ENCODE measurements at regions of chr18 and their contacts with region 1.

Region 1: DNA sequence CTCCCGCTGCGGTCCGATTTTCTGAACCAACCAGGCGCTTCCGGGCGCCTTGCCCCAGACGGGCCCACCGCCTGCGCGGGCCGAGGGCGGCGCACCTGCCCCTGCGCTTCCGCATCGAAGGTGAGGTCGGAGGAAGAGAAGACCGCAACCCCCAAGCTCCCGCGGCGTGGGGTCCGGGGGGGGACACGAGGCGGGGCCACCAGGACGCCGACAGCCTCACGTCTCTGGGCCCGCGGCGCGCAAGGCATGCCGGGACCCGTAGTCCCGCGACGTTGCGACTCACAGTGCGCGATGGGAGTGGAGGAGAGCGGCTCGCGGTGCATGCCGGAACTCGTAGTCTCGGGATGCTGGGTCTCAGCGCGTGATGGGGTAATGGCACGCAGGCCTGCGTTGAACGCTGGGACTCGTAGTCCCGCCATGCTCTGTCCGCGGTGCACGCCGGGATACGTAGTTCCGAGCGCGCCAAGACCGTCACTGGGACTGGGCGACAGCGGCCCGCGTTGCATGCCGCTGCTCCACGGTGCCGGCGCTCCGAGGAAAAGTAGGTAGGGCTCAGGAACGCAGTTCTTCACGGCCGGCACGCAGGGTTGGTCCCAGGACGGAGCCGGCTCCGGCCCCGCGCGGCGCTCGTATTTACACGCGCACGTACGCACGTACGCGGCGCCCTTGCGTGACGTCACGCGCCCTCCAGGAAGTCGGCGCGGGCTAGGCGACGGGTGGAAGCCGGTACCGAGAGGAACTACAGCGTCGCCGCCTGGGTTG is at the start of gene CTDP1:
- DNase-seq: peak; percentile 98
- ATAC-seq: peak; percentile 90
- H3K4me3 Mint-ChIP-seq: peak within 1 kb of the TSS; percentile 97
- H3K27ac Mint-ChIP-seq: peak within 1 kb of the TSS; percentile 98
- H3K4me1 Mint-ChIP-seq: peaks cover 47% of the 10 kb centered on the region
- H3K27me3 Mint-ChIP-seq: no peaks in the 10 kb centered on the region
- CTCF ChIP-seq: no peak
- total RNA-seq, gene CTDP1: 28.1 and 33.8 TPM in 2 replicates

Region 2: GRCh38 chr18:79405781-79406575 is 273.3 kb before region 1 on chr18:
- CTCF ChIA-PET with region 1: no interaction called
- POLR2A ChIA-PET with region 1: no interaction called
- intact Hi-C with region 1: loop called (anchors 1 kb)
- DNase-seq: peak; percentile 81
- ATAC-seq: peak; percentile 89
- H3K4me3 Mint-ChIP-seq: peak overlapping the region; percentile 80
- H3K27ac Mint-ChIP-seq: peak overlapping the region; percentile 98
- H3K4me1 Mint-ChIP-seq: peaks cover 65% of the 10 kb centered on the region
- H3K27me3 Mint-ChIP-seq: no peaks in the 10 kb centered on the region
- CTCF ChIP-seq: no peak

Region 3: DNA sequence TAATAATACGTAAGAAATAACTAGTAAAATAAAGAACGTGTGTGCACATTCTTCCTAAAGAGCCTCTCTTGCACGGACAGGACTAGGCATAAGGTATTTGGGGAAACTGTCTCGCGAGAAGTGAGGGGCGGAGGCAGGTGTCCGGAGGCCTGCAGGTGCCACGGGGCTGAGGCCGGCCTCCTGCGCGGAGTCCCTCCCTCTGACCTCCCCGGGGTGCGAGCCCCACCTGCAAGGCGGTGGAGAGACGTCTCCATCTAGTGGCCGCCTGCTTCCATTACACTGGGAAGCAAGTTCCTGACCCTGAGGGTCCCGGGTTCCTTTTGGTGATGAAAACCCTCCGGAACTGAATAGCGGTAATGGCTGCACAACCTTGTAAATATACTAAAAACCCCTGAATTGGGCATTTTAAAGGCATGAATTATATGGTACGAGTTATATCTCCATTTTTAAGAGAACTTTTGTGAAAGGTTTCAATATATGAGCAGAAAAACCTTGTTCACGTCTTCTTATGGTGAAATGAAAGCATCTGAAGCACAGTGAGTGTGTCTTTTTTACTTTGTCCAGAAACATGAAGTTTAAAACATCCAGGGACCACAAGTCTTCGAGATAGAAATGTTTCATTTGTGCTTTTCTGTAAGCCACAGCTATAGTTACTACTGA is 35.2 kb before region 1 on chr18:
- CTCF ChIA-PET with region 1: interaction called, 3 read pairs
- POLR2A ChIA-PET with region 1: no interaction called
- intact Hi-C with region 1: loop called (anchors 1 kb)
- DNase-seq: peak; percentile 68
- ATAC-seq: peak; percentile 93
- H3K4me3 Mint-ChIP-seq: no peak overlapping the region
- H3K27ac Mint-ChIP-seq: no peak overlapping the region
- H3K4me1 Mint-ChIP-seq: peaks cover 24% of the 10 kb centered on the region
- H3K27me3 Mint-ChIP-seq: no peaks in the 10 kb centered on the region
- CTCF ChIP-seq: peak; percentile 97

Region 4: DNA sequence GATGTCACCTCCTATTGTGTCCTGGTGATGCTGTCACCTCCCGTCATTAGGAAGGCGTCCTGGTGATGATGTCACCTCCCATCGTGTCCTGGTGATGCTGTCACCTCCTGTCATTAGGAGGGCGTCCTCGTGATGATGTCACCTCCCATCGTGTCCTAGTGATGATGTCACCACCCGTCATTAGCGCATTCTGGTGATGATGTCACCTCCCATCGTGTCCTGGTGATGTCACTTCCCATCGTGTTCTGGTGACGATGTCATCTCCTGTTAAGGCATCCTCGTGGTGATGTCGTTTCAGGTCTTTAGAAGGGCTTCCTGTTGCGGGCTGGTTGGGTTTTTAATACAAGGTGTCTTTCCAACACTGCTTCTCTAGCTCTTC is 41.1 kb after region 1 on chr18:
- CTCF ChIA-PET with region 1: no interaction called
- POLR2A ChIA-PET with region 1: no interaction called
- intact Hi-C with region 1: no loop called
- DNase-seq: no peak
- ATAC-seq: no peak
- H3K4me3 Mint-ChIP-seq: no peak overlapping the region
- H3K27ac Mint-ChIP-seq: no peak overlapping the region
- H3K4me1 Mint-ChIP-seq: no peaks in the 10 kb centered on the region
- H3K27me3 Mint-ChIP-seq: no peaks in the 10 kb centered on the region
- CTCF ChIP-seq: no peak

Region 5: DNA sequence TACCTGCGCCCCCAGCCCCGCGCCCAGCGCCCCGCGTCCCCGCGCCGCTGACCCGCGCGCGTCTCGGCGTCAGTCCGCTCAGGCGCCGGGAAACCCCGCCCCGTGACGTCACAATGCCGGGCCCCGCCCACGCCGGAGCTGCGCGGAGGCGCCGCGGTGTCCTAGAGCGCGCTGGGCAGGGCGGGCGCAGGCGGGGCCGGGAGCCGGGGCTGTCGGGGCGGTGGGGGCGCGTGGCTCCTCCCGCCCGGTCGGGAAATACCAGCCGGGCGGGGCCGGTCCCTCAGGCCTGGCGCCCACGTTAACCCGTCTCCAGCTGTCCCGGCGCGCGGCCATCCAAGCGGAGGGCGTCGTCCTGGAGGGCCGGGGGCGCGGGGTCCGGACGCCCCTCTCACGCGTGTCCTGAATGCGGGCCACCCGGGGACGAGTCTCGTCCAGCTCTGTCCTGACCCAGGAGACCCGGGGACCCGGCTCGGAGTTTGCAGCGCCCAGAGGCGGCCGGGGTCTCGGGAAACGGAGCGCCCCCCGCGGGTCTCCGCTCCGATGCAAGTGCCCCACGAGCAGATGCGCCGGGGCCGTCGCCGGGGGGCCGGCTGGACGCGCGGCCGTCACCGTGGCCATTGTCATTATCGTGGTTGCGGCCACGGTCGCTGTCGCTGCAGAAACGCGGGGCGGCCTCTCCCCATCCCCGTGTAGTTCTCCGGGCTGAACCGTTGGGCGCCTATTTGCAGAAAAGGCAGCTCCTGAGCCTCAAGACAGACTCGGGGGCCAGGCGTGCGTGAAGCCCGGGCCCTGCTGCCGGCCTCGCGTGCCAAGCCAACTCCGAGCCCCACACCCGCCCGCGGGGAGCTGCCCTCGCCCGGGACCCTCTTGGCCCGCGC is 272.5 kb after region 1 on chr18 and contains the start of gene SLC66A2:
- CTCF ChIA-PET with region 1: no interaction called
- POLR2A ChIA-PET with region 1: interaction called, 4 read pairs
- intact Hi-C with region 1: loop called (anchors 1 kb)
- DNase-seq: peak; percentile 97
- ATAC-seq: peak; percentile 80
- H3K4me3 Mint-ChIP-seq: peak within 1 kb of the TSS; percentile 85
- H3K27ac Mint-ChIP-seq: peak within 1 kb of the TSS; percentile 92
- H3K4me1 Mint-ChIP-seq: peaks cover 31% of the 10 kb centered on the region
- H3K27me3 Mint-ChIP-seq: no peaks in the 10 kb centered on the region
- CTCF ChIP-seq: no peak
- total RNA-seq, gene SLC66A2: 32.3 and 36.4 TPM in 2 replicates

Region 6: DNA sequence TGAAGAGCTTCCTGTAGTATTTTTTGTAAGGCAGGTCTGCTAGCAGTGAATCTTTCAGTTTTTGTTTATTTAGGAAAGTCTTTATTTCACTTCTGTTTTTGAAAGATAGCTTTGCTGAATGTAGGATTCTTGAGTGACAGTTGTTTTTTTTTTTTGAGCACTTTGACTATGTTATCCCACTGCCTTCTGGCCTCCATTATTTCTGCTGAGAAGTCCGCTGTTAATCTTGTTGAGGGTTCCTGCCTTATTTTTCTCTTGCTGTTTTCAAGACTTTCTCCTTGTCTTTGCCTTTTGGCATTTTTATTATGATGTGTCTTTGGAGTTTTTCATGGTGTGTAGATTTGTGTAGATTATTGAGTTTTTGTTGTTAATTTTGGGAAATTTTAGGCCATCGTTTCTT is 376.8 kb after region 1 on chr18:
- CTCF ChIA-PET with region 1: no interaction called
- POLR2A ChIA-PET with region 1: no interaction called
- intact Hi-C with region 1: no loop called
- DNase-seq: no peak
- ATAC-seq: no peak
- H3K4me3 Mint-ChIP-seq: no peak overlapping the region
- H3K27ac Mint-ChIP-seq: no peak overlapping the region
- H3K4me1 Mint-ChIP-seq: no peaks in the 10 kb centered on the region
- H3K27me3 Mint-ChIP-seq: no peaks in the 10 kb centered on the region
- CTCF ChIP-seq: no peak

Region 7: DNA sequence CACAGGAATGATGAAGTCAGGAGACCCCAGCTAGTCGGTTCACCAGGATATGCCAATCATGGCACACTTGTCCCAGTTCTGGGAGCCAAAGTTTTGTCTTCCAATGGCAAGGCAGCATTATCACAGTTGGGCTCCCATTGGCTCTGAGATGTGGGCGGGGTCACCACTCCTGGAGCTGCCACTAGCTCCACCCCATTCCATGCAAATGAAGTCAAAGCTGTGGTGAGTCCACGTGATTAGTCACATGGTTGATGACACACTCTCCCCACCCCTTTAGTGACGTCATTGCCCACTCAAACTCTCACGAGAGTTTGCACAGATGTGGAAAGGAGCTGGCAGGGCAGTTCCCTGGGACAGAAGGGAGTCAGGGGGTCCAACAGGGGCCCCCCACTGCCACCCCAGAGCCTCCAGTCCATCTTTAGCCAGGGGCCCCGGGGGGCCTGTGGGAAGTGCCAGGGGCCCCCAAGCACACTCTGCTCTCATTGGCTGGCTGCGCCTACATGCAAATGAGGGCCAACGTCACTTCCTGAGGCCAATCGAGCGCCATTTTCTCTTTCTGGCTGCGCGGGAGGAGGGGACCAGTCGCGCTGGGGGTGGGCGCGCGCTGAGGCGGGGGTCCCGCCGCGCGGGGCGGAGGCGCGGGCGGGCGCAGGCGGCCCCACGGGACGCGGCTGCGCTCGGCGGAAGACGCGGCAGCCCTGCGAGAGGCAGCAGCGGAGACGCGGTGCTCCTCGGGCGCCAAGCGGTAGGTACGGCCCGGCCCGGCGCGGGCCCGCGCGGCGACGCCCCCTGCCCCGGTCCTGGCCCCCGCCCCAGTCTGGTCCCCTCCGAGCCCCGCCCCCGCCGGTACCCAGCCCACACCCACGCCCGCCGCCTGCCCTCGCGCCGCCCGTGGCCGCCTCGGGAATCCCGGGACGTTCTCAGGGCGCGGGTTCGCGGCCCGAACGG is 429.7 kb after region 1 on chr18 and contains the start of gene ADNP2:
- CTCF ChIA-PET with region 1: no interaction called
- POLR2A ChIA-PET with region 1: no interaction called
- intact Hi-C with region 1: loop called (anchors 1 kb)
- DNase-seq: peak; percentile 63
- ATAC-seq: peak; percentile 66
- H3K4me3 Mint-ChIP-seq: peak within 1 kb of the TSS; percentile 84
- H3K27ac Mint-ChIP-seq: peak within 1 kb of the TSS; percentile 80
- H3K4me1 Mint-ChIP-seq: peaks cover 45% of the 10 kb centered on the region
- H3K27me3 Mint-ChIP-seq: no peaks in the 10 kb centered on the region
- CTCF ChIP-seq: no peak
- total RNA-seq, gene ADNP2: 19.2 and 19.7 TPM in 2 replicates